Common myeloid progenitor, CD34-positive (primary cell): ENCODE measurements at regions of chr11 and their contacts with region 1.

Region 1: GRCh38 chr11:46489661-46490560 is 98.3 kb upstream of the CHRM4 start:
- DNase-seq: peak; percentile 72 to 82 (median 78)
- H3K4me3 ChIP-seq: no peak overlapping the region
- H3K27ac ChIP-seq: no peak overlapping the region
- H3K4me1 ChIP-seq: peaks cover 4 to 9% (median 8%) of the 10 kb centered on the region in 4 experiments
- H3K27me3 ChIP-seq: no peaks in the 10 kb centered on the region

Region 2: GRCh38 chr11:46445920-46446771 is 43.8 kb before region 1 on chr11:
- CTCF ChIA-PET with region 1: interaction called, 10 read pairs
- POLR2A ChIA-PET with region 1: no interaction called
- DNase-seq: no peak
- H3K4me3 ChIP-seq: no peak overlapping the region
- H3K27ac ChIP-seq: no peak overlapping the region
- H3K4me1 ChIP-seq: no peaks in the 10 kb centered on the region
- H3K27me3 ChIP-seq: no peaks in the 10 kb centered on the region

Region 3: GRCh38 chr11:46504817-46505613 is 15.1 kb after region 1 on chr11:
- CTCF ChIA-PET with region 1: interaction called, 33 read pairs
- POLR2A ChIA-PET with region 1: no interaction called
- DNase-seq: no peak
- H3K4me3 ChIP-seq: no peak overlapping the region
- H3K27ac ChIP-seq: no peak overlapping the region
- H3K4me1 ChIP-seq: no peaks in the 10 kb centered on the region
- H3K27me3 ChIP-seq: no peaks in the 10 kb centered on the region

Region 4: DNA sequence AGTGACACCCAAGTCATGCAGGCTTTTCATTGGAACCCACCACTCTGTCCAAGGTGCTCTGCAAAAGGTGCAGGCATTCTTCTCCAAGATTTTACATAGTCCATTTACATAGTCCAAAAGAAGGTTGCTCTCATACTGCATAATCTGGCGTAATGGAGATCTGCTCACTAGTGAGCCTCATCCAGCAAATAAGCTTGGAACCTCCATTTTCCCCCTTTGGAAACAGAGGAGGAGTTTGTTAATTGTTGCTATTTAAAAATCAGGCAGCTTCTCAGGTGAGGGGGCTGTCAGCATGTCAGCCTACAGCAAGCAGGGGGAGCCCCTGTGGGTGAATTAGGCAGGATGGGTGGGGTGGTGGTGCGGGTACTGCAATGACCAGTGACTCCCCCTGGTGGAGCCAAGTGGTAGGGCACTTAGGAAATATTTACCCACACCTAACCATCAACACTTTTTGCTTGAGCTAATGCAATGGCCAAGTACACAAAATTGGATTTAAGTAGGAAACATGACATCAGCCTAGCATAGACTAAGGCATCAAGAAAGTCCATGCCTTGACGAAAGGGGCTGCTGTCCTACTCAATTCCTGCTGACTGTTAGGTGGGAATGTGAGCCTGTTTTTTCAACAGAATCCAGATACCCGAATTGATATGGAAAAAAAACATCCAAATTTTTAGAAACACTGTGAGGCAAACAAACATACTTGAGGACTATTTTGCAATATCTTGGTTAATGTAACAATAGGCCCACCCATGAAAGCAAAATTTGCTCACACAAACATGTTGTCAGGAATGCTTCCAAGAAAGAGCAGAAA is 39.4 kb after region 1 on chr11:
- CTCF ChIA-PET with region 1: interaction called, 190 read pairs
- POLR2A ChIA-PET with region 1: no interaction called
- DNase-seq: peak; percentile 86 to 87 (median 86)
- H3K4me3 ChIP-seq: no peak overlapping the region
- H3K27ac ChIP-seq: no peak overlapping the region
- H3K4me1 ChIP-seq: peaks cover 0 to 16% (median 12%) of the 10 kb centered on the region in 4 experiments
- H3K27me3 ChIP-seq: no peaks in the 10 kb centered on the region

Region 5: DNA sequence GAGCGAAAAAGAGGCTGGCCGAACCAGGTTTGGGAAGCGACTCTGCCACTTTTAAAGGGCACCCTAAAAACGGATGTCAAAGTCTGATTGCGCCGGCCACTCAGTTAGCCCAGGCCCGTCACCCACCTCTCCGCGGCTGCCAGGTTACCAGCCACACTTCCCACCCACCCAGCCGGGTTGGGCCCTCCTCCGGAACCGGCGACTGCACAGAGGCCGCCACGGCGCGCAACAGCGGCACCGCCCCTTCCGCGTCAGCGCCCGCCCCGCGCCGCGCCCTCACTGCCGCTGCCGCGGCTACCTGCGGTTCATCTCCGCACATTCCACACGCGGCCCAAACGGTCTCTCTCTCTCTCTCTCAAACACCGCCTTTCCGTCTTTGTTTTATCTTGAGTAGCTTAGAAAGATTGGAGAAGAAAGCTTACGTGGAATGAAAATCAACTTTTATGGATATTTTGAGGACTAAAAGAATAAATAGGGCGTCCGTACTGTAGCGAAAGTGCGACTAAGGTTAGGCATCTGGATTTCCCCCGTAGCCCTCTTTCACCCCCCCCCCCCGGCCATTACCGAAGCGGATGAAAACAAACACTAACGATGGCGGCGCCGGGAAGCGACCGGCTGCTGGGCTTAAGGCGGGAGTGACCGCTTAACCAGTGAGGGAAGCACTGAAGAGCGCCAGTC is 127.2 kb after region 1 on chr11 and contains the starts of genes ATG13 and HARBI1:
- CTCF ChIA-PET with region 1: interaction called, 13 read pairs
- POLR2A ChIA-PET with region 1: no interaction called
- DNase-seq: peak; percentile 94 to 97 (median 96)
- H3K4me3 ChIP-seq: peak within 1 kb of the TSS; percentile 93 to 100 (median 98)
- H3K27ac ChIP-seq: peak within 1 kb of the TSS; percentile 100
- H3K4me1 ChIP-seq: peaks cover 10 to 18% (median 14%) of the 10 kb centered on the region in 4 experiments
- H3K27me3 ChIP-seq: no peaks in the 10 kb centered on the region